ENCODE measurements at regions of chr9 and their contacts with region 1.

Region 1: GRCh38 chr9:99266255-99267023 is 44.4 kb downstream of the SEC61B start:
- DNase-seq: peak; percentile 48
- ATAC-seq: peak; percentile 82
- H3K4me3 ChIP-seq: no peak overlapping the region
- H3K27ac ChIP-seq: peak overlapping the region; percentile 57; the same call in 1 of the 2 replicates
- H3K4me1 ChIP-seq: peaks cover 40% of the 10 kb centered on the region
- H3K27me3 ChIP-seq: no peaks in the 10 kb centered on the region
- CTCF ChIP-seq: peak; percentile 90 to 97 (median 93); a peak in 5 of 6 replicates
- EP300 ChIP-seq: no peak
- POLR2A ChIP-seq: no peak
- RAD21 ChIP-seq: peak; percentile 92

Region 2: GRCh38 chr9:99130069-99130468 is 136.4 kb before region 1 on chr9:
- CTCF ChIA-PET with region 1: no interaction called
- POLR2A ChIA-PET with region 1: no interaction called
- RAD21 ChIA-PET with region 1: no interaction called
- SMC1A ChIA-PET with region 1: no interaction called
- in situ Hi-C with region 1: no loop called
- intact Hi-C with region 1: no loop called
- DNase-seq: peak; percentile 72
- ATAC-seq: peak; percentile 87
- H3K4me3 ChIP-seq: no peak overlapping the region
- H3K27ac ChIP-seq: peak overlapping the region; percentile 22
- H3K4me1 ChIP-seq: peaks cover 38% of the 10 kb centered on the region
- H3K27me3 ChIP-seq: no peaks in the 10 kb centered on the region
- CTCF ChIP-seq: no peak
- EP300 ChIP-seq: peak; percentile 81 to 95
- POLR2A ChIP-seq: no peak
- RAD21 ChIP-seq: 0 out of 2 replicates have a peak, but pooled peaks have one; percentile 2

Region 3: GRCh38 chr9:99221621-99222415 is 44.6 kb before region 1 on chr9 and contains the starts of genes ALG2 and SEC61B:
- CTCF ChIA-PET with region 1: interaction called, 9 read pairs
- POLR2A ChIA-PET with region 1: interaction called, 3 read pairs
- RAD21 ChIA-PET with region 1: interaction called, 3 read pairs
- SMC1A ChIA-PET with region 1: interaction called, 12 read pairs
- in situ Hi-C with region 1: no loop called
- intact Hi-C with region 1: loop called (anchors 2 kb)
- DNase-seq: peak; percentile 94
- ATAC-seq: peak; percentile 91
- H3K4me3 ChIP-seq: peak within 1 kb of the TSS; percentile 97
- H3K27ac ChIP-seq: peak within 1 kb of the TSS; percentile 99
- H3K4me1 ChIP-seq: peaks cover 9% of the 10 kb centered on the region
- H3K27me3 ChIP-seq: no peaks in the 10 kb centered on the region
- CTCF ChIP-seq: no peak
- EP300 ChIP-seq: peak in 1 of 2 experiments; percentile 51; a peak in 1 of 4 replicates
- POLR2A ChIP-seq: peak; percentile 97
- RAD21 ChIP-seq: no peak
- polyA plus RNA-seq, gene ALG2: 8.8 to 17.8 TPM
- polyA plus RNA-seq, gene SEC61B: 108 to 229 TPM

Region 4: DNA sequence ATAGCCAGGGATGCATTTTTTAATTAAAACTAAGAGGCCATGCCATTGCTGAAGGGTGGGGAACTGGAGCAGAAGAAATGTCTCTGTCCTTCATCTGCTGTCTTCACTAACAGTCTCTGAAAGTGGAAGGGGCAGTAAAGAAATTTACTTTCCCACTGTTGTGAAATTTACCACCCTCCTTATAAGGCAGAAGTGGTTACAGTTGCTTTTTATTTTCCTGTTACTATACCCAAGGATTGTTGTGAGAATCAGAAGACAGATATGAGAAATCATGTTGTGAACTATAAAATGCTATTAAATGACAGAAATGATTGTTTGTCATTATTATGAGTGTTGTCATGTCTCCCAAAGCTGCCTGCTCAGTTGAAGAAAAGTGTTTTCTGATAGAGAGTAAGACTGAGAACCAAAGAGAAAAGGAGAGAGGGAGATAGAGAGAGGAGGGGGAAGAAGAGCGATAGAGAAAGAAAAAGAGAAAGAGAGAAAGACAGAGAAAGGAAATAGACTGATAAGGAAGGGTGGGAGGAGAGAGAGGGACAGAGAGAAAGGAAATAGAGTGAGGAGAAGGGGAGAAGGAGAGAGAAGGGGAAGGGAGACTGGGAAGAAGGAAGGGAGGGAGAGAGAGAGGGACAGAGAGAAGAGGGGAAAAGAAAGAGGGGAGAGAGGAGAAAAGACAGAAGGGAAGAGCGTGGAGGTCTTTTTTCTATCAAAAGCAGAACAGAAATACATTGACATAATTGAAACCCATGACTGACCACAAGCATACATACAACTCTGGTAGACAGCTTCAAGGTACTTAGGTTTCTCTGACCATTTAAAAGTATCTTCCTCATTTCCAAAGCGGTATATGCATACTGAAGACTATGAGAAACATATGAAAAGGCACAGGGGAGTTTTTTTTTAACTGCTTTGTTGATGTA is 21.8 kb before region 1 on chr9:
- CTCF ChIA-PET with region 1: interaction called, 13 read pairs
- POLR2A ChIA-PET with region 1: no interaction called
- RAD21 ChIA-PET with region 1: interaction called, 5 read pairs
- SMC1A ChIA-PET with region 1: interaction called, 17 read pairs
- in situ Hi-C with region 1: no loop called
- intact Hi-C with region 1: no loop called
- DNase-seq: peak; percentile 68
- ATAC-seq: peak; percentile 96
- H3K4me3 ChIP-seq: no peak overlapping the region
- H3K27ac ChIP-seq: peak overlapping the region; percentile 94
- H3K4me1 ChIP-seq: peaks cover 31% of the 10 kb centered on the region
- H3K27me3 ChIP-seq: no peaks in the 10 kb centered on the region
- CTCF ChIP-seq: no peak
- EP300 ChIP-seq: peak; percentile 84 to 96
- POLR2A ChIP-seq: no peak
- RAD21 ChIP-seq: no peak

Region 5: GRCh38 chr9:99253772-99254431 is 12.5 kb before region 1 on chr9:
- CTCF ChIA-PET with region 1: interaction called, 24 read pairs
- POLR2A ChIA-PET with region 1: interaction called, 8 read pairs
- RAD21 ChIA-PET with region 1: interaction called, 11 read pairs
- SMC1A ChIA-PET with region 1: interaction called, 20 read pairs
- in situ Hi-C with region 1: no loop called
- intact Hi-C with region 1: no loop called
- DNase-seq: peak; percentile 90
- ATAC-seq: peak; percentile 89
- H3K4me3 ChIP-seq: peak overlapping the region; percentile 29; the same call in 1 of the 2 replicates
- H3K27ac ChIP-seq: peak overlapping the region; percentile 96
- H3K4me1 ChIP-seq: peaks cover 34% of the 10 kb centered on the region
- H3K27me3 ChIP-seq: no peaks in the 10 kb centered on the region
- CTCF ChIP-seq: peak; percentile 2 to 17 (median 13); a peak in 3 of 6 replicates
- EP300 ChIP-seq: peak; percentile 75 to 89; a peak in 3 of 4 replicates
- POLR2A ChIP-seq: peak; percentile 81
- RAD21 ChIP-seq: no peak

Region 6: DNA sequence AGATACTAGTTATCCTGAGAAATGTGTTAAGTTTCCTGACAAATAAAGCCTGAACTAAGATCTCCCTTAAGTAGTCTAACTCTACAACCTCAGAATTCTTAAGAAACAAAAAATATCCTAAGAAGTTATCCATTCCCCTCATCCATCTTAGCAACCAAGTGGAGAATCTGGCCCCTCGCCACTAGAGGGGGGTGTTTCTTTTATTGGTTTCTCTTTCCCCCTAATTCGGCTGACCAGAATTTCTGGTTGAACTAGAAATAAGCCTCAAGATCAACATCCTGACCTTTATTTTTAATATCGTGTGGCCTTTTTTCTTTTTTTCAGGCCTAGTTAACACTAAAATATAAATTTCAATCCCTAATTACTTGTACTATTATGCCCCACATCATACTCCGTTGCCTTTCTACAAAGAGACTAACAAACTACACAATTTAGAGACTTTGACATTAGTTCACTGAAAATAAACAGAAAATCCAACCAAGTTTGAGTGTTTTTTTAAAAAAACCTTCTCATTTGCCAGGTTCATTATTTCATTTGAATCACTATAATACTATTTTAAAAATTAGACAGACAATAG is 540.9 kb after region 1 on chr9:
- CTCF ChIA-PET with region 1: interaction called, 6 read pairs
- POLR2A ChIA-PET with region 1: no interaction called
- RAD21 ChIA-PET with region 1: interaction called, 5 read pairs
- SMC1A ChIA-PET with region 1: interaction called, 4 read pairs
- in situ Hi-C with region 1: no loop called
- intact Hi-C with region 1: loop called (anchors 5 kb)
- DNase-seq: no peak
- ATAC-seq: peak; percentile 87
- H3K4me3 ChIP-seq: no peak overlapping the region
- H3K27ac ChIP-seq: no peak overlapping the region
- H3K4me1 ChIP-seq: peaks cover 6% of the 10 kb centered on the region
- H3K27me3 ChIP-seq: no peaks in the 10 kb centered on the region
- CTCF ChIP-seq: peak; percentile 73 to 81 (median 75)
- EP300 ChIP-seq: no peak
- POLR2A ChIP-seq: no peak
- RAD21 ChIP-seq: peak; percentile 89

Region 7: GRCh38 chr9:100011062-100011681 is 744.7 kb after region 1 on chr9:
- CTCF ChIA-PET with region 1: interaction called, 5 read pairs
- POLR2A ChIA-PET with region 1: no interaction called
- RAD21 ChIA-PET with region 1: interaction called, 3 read pairs
- SMC1A ChIA-PET with region 1: interaction called, 6 read pairs
- in situ Hi-C with region 1: no loop called
- intact Hi-C with region 1: loop called (anchors 2 kb)
- DNase-seq: peak; percentile 38
- ATAC-seq: peak; percentile 73
- H3K4me3 ChIP-seq: no peak overlapping the region
- H3K27ac ChIP-seq: no peak overlapping the region
- H3K4me1 ChIP-seq: no peaks in the 10 kb centered on the region
- H3K27me3 ChIP-seq: no peaks in the 10 kb centered on the region
- CTCF ChIP-seq: peak; percentile 48 to 58 (median 56)
- EP300 ChIP-seq: no peak
- POLR2A ChIP-seq: no peak
- RAD21 ChIP-seq: peak; percentile 76

Measured in GM12878 (cell line).